ENCODE measurements at regions of chr11 and their contacts with region 1.

Region 1: GRCh38 chr11:57249384-57250319 is 12.6 kb upstream of the APLNR start:
- DNase-seq: peak; percentile 67 to 69
- H3K4me3 ChIP-seq: no peak overlapping the region
- H3K27ac ChIP-seq: peak overlapping the region; percentile 40; the same call in 1 of the 2 replicates
- H3K4me1 ChIP-seq: peaks cover 17% of the 10 kb centered on the region
- H3K27me3 ChIP-seq: no peaks in the 10 kb centered on the region
- CTCF ChIP-seq: peak; percentile 90

Region 2: GRCh38 chr11:55942785-55943392 is 1306.8 kb before region 1 on chr11:
- CTCF ChIA-PET with region 1: no interaction called
- POLR2A ChIA-PET with region 1: no interaction called
- intact Hi-C with region 1: loop called (anchors 2 kb)
- DNase-seq: peak in 1 of 2 experiments; percentile 49
- H3K4me3 ChIP-seq: no peak overlapping the region
- H3K27ac ChIP-seq: no peak overlapping the region
- H3K4me1 ChIP-seq: no peaks in the 10 kb centered on the region
- H3K27me3 ChIP-seq: no peaks in the 10 kb centered on the region
- CTCF ChIP-seq: peak; percentile 80

Region 3: GRCh38 chr11:56841210-56841810 is 408.3 kb before region 1 on chr11:
- CTCF ChIA-PET with region 1: interaction called, 68 read pairs
- POLR2A ChIA-PET with region 1: interaction called, 3 read pairs
- intact Hi-C with region 1: loop called (anchors 1 kb)
- DNase-seq: peak; percentile 52
- H3K4me3 ChIP-seq: no peak overlapping the region
- H3K27ac ChIP-seq: no peak overlapping the region
- H3K4me1 ChIP-seq: peaks cover 8% of the 10 kb centered on the region; the same call in 1 of the 2 replicates
- H3K27me3 ChIP-seq: no peaks in the 10 kb centered on the region
- CTCF ChIP-seq: peak; percentile 93

Region 4: DNA sequence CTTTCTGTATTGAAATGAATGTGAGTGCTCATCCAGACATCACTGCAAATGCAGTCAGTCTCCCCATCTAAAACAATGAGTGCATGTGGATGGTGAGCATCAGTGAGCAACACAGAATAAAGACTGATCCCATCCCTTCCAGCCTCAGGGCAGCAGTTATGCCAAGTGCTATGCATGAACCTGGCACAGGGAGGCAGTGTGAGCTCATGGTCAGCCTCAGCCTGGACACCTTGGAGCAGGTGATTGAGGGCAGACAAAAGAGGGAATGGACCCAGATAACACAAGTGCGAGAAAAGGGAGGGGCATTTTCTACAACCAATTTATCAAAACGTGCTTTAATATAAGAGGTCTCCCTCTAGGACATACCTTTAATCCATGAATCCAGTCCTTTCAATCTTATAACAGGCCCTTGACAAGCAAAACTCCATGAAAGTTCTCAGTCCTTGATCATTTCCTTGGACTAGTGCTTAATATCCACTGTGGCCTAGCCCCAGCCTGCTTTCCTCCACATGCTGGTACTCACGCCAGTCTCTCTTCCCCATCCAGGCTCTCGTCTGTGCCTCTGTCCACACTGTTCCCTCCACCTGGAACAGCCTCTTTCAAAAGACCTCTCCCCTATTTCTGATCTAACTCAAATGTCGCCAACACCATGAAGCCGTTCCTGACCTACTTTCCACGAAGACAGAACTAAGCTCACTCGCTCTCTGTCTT is 118.4 kb before region 1 on chr11:
- CTCF ChIA-PET with region 1: interaction called, 25 read pairs
- POLR2A ChIA-PET with region 1: no interaction called
- intact Hi-C with region 1: loop called (anchors 1 kb)
- DNase-seq: peak; percentile 16 to 45
- H3K4me3 ChIP-seq: no peak overlapping the region
- H3K27ac ChIP-seq: no peak overlapping the region
- H3K4me1 ChIP-seq: peaks cover 28% of the 10 kb centered on the region
- H3K27me3 ChIP-seq: no peaks in the 10 kb centered on the region
- CTCF ChIP-seq: peak; percentile 76

Region 5: GRCh38 chr11:57324886-57325734 is 75.5 kb after region 1 on chr11 and contains the start of gene TNKS1BP1:
- CTCF ChIA-PET with region 1: interaction called, 26 read pairs
- POLR2A ChIA-PET with region 1: interaction called, 4 read pairs
- intact Hi-C with region 1: loop called (anchors 2 kb)
- DNase-seq: peak; percentile 94 to 99
- H3K4me3 ChIP-seq: peak within 1 kb of the TSS; percentile 57
- H3K27ac ChIP-seq: peak within 1 kb of the TSS; percentile 93
- H3K4me1 ChIP-seq: peaks cover 49% of the 10 kb centered on the region
- H3K27me3 ChIP-seq: no peaks in the 10 kb centered on the region
- CTCF ChIP-seq: no peak
- total RNA-seq, gene TNKS1BP1: 181 and 218 TPM in 2 replicates

Measured in PC-9 (cell line).